CD4-positive, alpha-beta memory T cell (primary cell): ENCODE measurements at regions of chr1 and their contacts with region 1.

Region 1: GRCh38 chr1:26233903-26234643 is at the start of gene CEP85:
- DNase-seq: peak; percentile 98 to 99 (median 98)
- H3K4me3 ChIP-seq: peak within 1 kb of the TSS; percentile 90 to 97
- H3K4me3 Mint-ChIP-seq: peak within 1 kb of the TSS; percentile 92 to 100 (median 98)
- H3K27ac ChIP-seq: peak within 1 kb of the TSS; percentile 77
- H3K27ac Mint-ChIP-seq: peak within 1 kb of the TSS; percentile 84 to 100 (median 97)
- H3K4me1 ChIP-seq: peaks cover 26% of the 10 kb centered on the region
- H3K4me1 Mint-ChIP-seq: peaks cover 18 to 43% (median 33%) of the 10 kb centered on the region in 4 donors
- H3K27me3 ChIP-seq: no peaks in the 10 kb centered on the region
- H3K27me3 Mint-ChIP-seq: peaks cover 0 to 1% of the 10 kb centered on the region in 2 donors
- total RNA-seq, gene CEP85: 20.4 to 21.9 TPM

Region 2: GRCh38 chr1:26126321-26127084 is 107.6 kb before region 1 on chr1:
- CTCF ChIA-PET with region 1: interaction called, 7 read pairs
- POLR2A ChIA-PET with region 1: interaction called, 14 read pairs
- intact Hi-C with region 1: no loop called
- DNase-seq: peak; percentile 86 to 94 (median 90)
- H3K4me3 ChIP-seq: peak overlapping the region in 1 of 2 donors; percentile 47
- H3K4me3 Mint-ChIP-seq: peak overlapping the region; percentile 79 to 92 (median 86)
- H3K27ac ChIP-seq: peak overlapping the region; percentile 55
- H3K27ac Mint-ChIP-seq: peak overlapping the region; percentile 83 to 99 (median 96)
- H3K4me1 ChIP-seq: peaks cover 63% of the 10 kb centered on the region
- H3K4me1 Mint-ChIP-seq: peaks cover 32 to 51% (median 42%) of the 10 kb centered on the region in 4 donors
- H3K27me3 ChIP-seq: no peaks in the 10 kb centered on the region
- H3K27me3 Mint-ChIP-seq: no peaks in the 10 kb centered on the region

Region 3: DNA sequence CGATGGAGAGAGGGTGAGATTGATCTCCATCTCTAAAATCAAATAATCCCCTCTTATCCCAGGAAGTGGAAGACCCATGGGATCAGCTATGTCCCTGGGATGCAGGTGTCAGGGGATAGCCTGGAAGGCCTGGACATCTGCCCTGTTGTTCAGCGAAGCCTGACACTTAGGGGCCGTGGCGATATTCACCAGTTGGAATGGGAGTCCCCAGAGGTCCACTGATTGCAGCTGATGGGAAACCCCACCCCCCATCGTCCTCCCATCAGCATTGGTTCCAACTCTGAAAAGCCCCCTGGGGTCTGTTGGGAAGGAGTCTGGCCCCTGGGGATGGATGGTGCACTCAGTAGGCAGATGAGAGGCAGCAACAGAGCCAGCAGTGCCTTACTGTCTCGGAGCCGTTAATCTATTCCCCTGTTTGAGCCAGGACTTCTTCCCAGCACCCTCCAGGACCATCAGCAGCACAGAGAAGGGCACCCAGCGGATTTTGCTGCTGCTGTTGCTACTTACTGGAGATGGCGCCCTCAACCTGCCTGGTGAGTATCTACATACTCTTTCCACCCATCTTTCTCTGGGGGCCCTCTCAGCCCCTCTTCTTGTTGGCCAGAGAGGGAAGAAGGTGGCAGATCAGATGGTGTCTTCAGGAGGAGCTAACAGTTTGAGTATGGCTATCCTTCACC is 30.3 kb before region 1 on chr1:
- CTCF ChIA-PET with region 1: interaction called, 19 read pairs
- POLR2A ChIA-PET with region 1: interaction called, 24 read pairs
- intact Hi-C with region 1: loop called (anchors 2 kb)
- DNase-seq: no peak
- H3K4me3 ChIP-seq: no peak overlapping the region
- H3K4me3 Mint-ChIP-seq: no peak overlapping the region
- H3K27ac ChIP-seq: no peak overlapping the region
- H3K27ac Mint-ChIP-seq: peak overlapping the region in 5 of 7 donors; percentile 1 to 98 (median 76)
- H3K4me1 ChIP-seq: peaks cover 32% of the 10 kb centered on the region
- H3K4me1 Mint-ChIP-seq: peaks cover 30 to 46% (median 37%) of the 10 kb centered on the region in 4 donors
- H3K27me3 ChIP-seq: no peaks in the 10 kb centered on the region
- H3K27me3 Mint-ChIP-seq: no peaks in the 10 kb centered on the region

Region 4: GRCh38 chr1:26279456-26280332 is 45.6 kb after region 1 on chr1 and contains the start of gene SH3BGRL3:
- CTCF ChIA-PET with region 1: interaction called, 22 read pairs
- POLR2A ChIA-PET with region 1: interaction called, 29 read pairs
- intact Hi-C with region 1: loop called (anchors 2 kb)
- DNase-seq: peak; percentile 83 to 88 (median 86)
- H3K4me3 ChIP-seq: peak within 1 kb of the TSS; percentile 50 to 92
- H3K4me3 Mint-ChIP-seq: peak within 1 kb of the TSS; percentile 85 to 96 (median 90)
- H3K27ac ChIP-seq: peak within 1 kb of the TSS; percentile 82
- H3K27ac Mint-ChIP-seq: peak within 1 kb of the TSS; percentile 94 to 98 (median 97)
- H3K4me1 ChIP-seq: peaks cover 88% of the 10 kb centered on the region
- H3K4me1 Mint-ChIP-seq: peaks cover 58 to 90% (median 76%) of the 10 kb centered on the region in 4 donors
- H3K27me3 ChIP-seq: no peaks in the 10 kb centered on the region
- H3K27me3 Mint-ChIP-seq: no peaks in the 10 kb centered on the region
- total RNA-seq, gene SH3BGRL3: 293 to 305 TPM

Region 5: GRCh38 chr1:26378088-26378878 is 144.2 kb after region 1 on chr1:
- CTCF ChIA-PET with region 1: interaction called, 12 read pairs
- POLR2A ChIA-PET with region 1: interaction called, 8 read pairs
- intact Hi-C with region 1: no loop called
- DNase-seq: peak; percentile 86 to 95 (median 90)
- H3K4me3 ChIP-seq: peak overlapping the region in 1 of 2 donors; percentile 32
- H3K4me3 Mint-ChIP-seq: peak overlapping the region; percentile 55 to 87 (median 74)
- H3K27ac ChIP-seq: peak overlapping the region; percentile 53
- H3K27ac Mint-ChIP-seq: peak overlapping the region; percentile 84 to 99 (median 96)
- H3K4me1 ChIP-seq: peaks cover 82% of the 10 kb centered on the region
- H3K4me1 Mint-ChIP-seq: peaks cover 53 to 92% (median 69%) of the 10 kb centered on the region in 4 donors
- H3K27me3 ChIP-seq: no peaks in the 10 kb centered on the region
- H3K27me3 Mint-ChIP-seq: no peaks in the 10 kb centered on the region

Region 6: GRCh38 chr1:26431979-26432695 is 198.1 kb after region 1 on chr1 and contains the start of gene DHDDS:
- CTCF ChIA-PET with region 1: interaction called, 5 read pairs
- POLR2A ChIA-PET with region 1: interaction called, 12 read pairs
- intact Hi-C with region 1: no loop called
- DNase-seq: peak; percentile 97 to 99 (median 97)
- H3K4me3 ChIP-seq: peak within 1 kb of the TSS; percentile 85 to 88
- H3K4me3 Mint-ChIP-seq: peak within 1 kb of the TSS; percentile 89 to 98 (median 94)
- H3K27ac ChIP-seq: peak within 1 kb of the TSS; percentile 69
- H3K27ac Mint-ChIP-seq: peak within 1 kb of the TSS; percentile 71 to 98 (median 97)
- H3K4me1 ChIP-seq: peaks cover 28% of the 10 kb centered on the region
- H3K4me1 Mint-ChIP-seq: peaks cover 10 to 25% (median 17%) of the 10 kb centered on the region in 4 donors
- H3K27me3 ChIP-seq: no peaks in the 10 kb centered on the region
- H3K27me3 Mint-ChIP-seq: peaks cover 2 to 4% of the 10 kb centered on the region in 2 donors
- total RNA-seq, gene DHDDS: 44.4 to 46.2 TPM

Region 7: DNA sequence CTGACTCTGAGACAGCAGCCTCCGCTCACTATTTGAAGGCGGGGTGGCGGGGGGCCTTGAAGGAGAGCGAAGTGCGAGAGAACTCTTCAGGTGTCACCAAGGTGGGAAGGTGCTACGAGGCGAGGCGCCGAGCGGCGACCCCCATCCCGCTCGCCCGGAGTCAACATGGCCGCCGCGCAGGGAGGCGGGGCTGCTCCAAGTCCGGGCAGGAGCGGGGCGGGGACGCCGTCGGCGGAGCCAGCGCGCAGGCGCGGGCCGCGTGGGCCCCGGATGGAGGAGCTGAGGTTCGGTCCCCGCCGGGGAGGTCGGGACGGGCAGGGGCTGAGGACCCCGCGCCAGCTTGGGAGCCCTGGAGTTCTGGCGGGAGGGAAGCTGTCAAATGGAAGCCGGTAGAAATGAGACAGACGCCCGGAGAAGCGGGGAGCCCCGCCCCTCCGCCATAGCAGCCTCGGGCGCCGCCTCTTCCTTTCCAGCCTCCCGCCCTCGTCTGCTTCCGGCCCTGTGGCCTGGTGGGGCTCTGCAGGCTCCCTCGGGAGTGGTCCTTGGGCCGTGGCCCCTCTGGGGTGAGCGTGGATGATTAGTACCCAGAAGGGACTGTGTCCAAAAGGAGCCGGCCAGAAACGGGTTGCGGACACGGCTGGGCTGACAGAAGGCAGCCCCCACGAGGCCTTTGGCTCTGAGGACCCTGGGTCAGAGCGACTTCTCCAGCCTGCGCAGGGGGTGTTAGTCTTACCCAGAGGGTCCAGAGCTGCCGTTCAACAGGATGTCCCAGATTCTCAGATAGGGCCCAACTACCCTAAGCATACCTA is 553.8 kb after region 1 on chr1 and contains the start of gene PIGV:
- CTCF ChIA-PET with region 1: no interaction called
- POLR2A ChIA-PET with region 1: no interaction called
- intact Hi-C with region 1: no loop called
- DNase-seq: peak; percentile 87 to 92 (median 89)
- H3K4me3 ChIP-seq: peak within 1 kb of the TSS; percentile 87 to 88
- H3K4me3 Mint-ChIP-seq: peak within 1 kb of the TSS; percentile 98 to 100 (median 99)
- H3K27ac ChIP-seq: peak within 1 kb of the TSS; percentile 90
- H3K27ac Mint-ChIP-seq: peak within 1 kb of the TSS; percentile 99 to 100 (median 100)
- H3K4me1 ChIP-seq: peaks cover 79% of the 10 kb centered on the region
- H3K4me1 Mint-ChIP-seq: peaks cover 58 to 83% (median 72%) of the 10 kb centered on the region in 4 donors
- H3K27me3 ChIP-seq: no peaks in the 10 kb centered on the region
- H3K27me3 Mint-ChIP-seq: no peaks in the 10 kb centered on the region
- total RNA-seq, gene PIGV: 17.7 to 18.2 TPM